Activated T-helper 1 cell treated with anti-CD3 and anti-CD28 coated beads, Interleukin-12 subunit alpha, Interleukin-12 subunit beta, Interleukin-2, Interleukin-4 antibody, amounts not matched to agents 30 ng/mL and 10 ng/mL and 1 ng/mL, durations not matched to agents 14 hours and 24 hours and 36 hours (primary cell): ENCODE measurements at regions of chr3 and their contacts with region 1.

Region 1: GRCh38 chr3:189630767-189631372 is 319 bp upstream of the TP63 start:
- DNase-seq: no peak
- H3K4me3 Mint-ChIP-seq: peak overlapping the region; percentile 27
- H3K27ac Mint-ChIP-seq: peak overlapping the region; percentile 20
- H3K4me1 Mint-ChIP-seq: peaks cover 37% of the 10 kb centered on the region
- H3K27me3 Mint-ChIP-seq: peaks cover 2% of the 10 kb centered on the region

Region 2: DNA sequence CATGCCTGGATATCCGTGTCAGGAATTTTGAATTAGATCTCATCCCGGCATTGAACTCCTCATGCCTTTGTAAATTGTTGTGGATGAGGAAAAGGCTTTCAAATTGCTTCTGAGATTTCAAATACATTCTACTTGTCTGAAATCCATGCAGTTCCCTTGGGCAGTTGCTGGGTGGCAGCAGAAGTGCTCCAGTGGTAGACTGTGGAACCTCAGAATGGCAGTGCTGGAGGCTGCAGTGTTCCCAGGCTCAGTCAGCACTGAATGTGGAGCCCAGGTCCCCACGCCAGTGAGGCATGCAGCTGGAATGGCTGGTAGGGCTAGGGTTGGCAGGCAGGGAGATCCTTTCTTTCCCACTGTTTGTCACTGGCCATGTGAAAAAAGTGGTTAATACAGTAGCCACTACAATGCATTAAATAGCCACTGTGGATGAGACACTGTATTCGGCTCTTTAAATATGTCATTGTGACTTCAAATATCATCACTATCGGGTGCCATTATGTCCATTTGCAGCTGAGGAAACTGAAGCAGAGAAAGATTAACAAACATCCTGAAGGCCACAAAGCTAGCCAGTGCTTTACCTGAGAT is 360.5 kb before region 1 on chr3:
- intact Hi-C with region 1: loop called (anchors 5 kb)
- DNase-seq: peak; percentile 7
- H3K4me3 Mint-ChIP-seq: no peak overlapping the region
- H3K27ac Mint-ChIP-seq: no peak overlapping the region
- H3K4me1 Mint-ChIP-seq: peaks cover 15% of the 10 kb centered on the region
- H3K27me3 Mint-ChIP-seq: no peaks in the 10 kb centered on the region

Region 3: GRCh38 chr3:189588070-189588820 is 42.6 kb before region 1 on chr3:
- intact Hi-C with region 1: loop called (anchors 5 kb)
- DNase-seq: no peak
- H3K4me3 Mint-ChIP-seq: no peak overlapping the region
- H3K27ac Mint-ChIP-seq: no peak overlapping the region
- H3K4me1 Mint-ChIP-seq: peaks cover 14% of the 10 kb centered on the region
- H3K27me3 Mint-ChIP-seq: peaks cover 8% of the 10 kb centered on the region

Region 4: GRCh38 chr3:189947948-189948723 is 317.3 kb after region 1 on chr3:
- intact Hi-C with region 1: loop called (anchors 10 kb)
- DNase-seq: no peak
- H3K4me3 Mint-ChIP-seq: no peak overlapping the region
- H3K27ac Mint-ChIP-seq: no peak overlapping the region
- H3K4me1 Mint-ChIP-seq: peaks cover 6% of the 10 kb centered on the region
- H3K27me3 Mint-ChIP-seq: peaks cover 3% of the 10 kb centered on the region